ENCODE measurements at regions of chr10 and their contacts with region 1.

Region 1: GRCh38 chr10:7121154-7121810 is 289.6 kb downstream of the SFMBT2 start:
- DNase-seq: peak; percentile 15 to 85
- H3K4me3 ChIP-seq: no peak overlapping the region
- H3K27ac ChIP-seq: no peak overlapping the region
- H3K4me1 ChIP-seq: no peaks in the 10 kb centered on the region
- H3K27me3 ChIP-seq: no peaks in the 10 kb centered on the region
- CTCF ChIP-seq: peak; percentile 71 to 84 (median 76)
- EP300 ChIP-seq: no peak
- POLR2A ChIP-seq: no peak
- RAD21 ChIP-seq: peak; percentile 84 to 86

Region 2: DNA sequence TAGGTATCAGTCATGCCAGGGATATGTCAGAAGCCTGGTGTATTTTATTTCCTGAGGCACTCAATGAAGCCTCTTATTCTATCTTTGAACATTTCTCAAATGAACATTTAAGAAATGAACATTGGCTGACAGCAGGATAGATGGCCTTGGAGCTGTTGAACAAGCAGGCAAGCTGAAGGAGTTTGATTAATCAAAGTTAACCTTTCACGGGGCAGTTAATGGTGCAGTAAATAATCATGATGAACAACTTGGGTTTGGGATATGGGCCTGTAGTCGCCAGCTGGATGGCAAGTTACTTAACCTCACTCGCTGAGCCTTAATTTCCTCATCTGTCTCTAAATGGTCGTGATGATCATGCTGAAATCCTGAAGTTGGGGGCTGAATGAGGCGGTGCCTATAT is 43.4 kb before region 1 on chr10:
- CTCF ChIA-PET with region 1: no interaction called
- POLR2A ChIA-PET with region 1: no interaction called
- DNase-seq: no peak
- H3K4me3 ChIP-seq: no peak overlapping the region
- H3K27ac ChIP-seq: no peak overlapping the region
- H3K4me1 ChIP-seq: peaks cover 0 to 9% (median 4%) of the 10 kb centered on the region in 4 experiments; a peak in 3 of 7 replicates
- H3K27me3 ChIP-seq: no peaks in the 10 kb centered on the region
- CTCF ChIP-seq: no peak
- EP300 ChIP-seq: no peak
- POLR2A ChIP-seq: no peak
- RAD21 ChIP-seq: no peak

Region 3: GRCh38 chr10:7102557-7103349 is 18.5 kb before region 1 on chr10:
- CTCF ChIA-PET with region 1: interaction called, 12 read pairs
- POLR2A ChIA-PET with region 1: no interaction called
- DNase-seq: no peak
- H3K4me3 ChIP-seq: no peak overlapping the region
- H3K27ac ChIP-seq: no peak overlapping the region
- H3K4me1 ChIP-seq: no peaks in the 10 kb centered on the region
- H3K27me3 ChIP-seq: no peaks in the 10 kb centered on the region
- CTCF ChIP-seq: no peak
- EP300 ChIP-seq: no peak
- POLR2A ChIP-seq: no peak
- RAD21 ChIP-seq: no peak

Region 4: DNA sequence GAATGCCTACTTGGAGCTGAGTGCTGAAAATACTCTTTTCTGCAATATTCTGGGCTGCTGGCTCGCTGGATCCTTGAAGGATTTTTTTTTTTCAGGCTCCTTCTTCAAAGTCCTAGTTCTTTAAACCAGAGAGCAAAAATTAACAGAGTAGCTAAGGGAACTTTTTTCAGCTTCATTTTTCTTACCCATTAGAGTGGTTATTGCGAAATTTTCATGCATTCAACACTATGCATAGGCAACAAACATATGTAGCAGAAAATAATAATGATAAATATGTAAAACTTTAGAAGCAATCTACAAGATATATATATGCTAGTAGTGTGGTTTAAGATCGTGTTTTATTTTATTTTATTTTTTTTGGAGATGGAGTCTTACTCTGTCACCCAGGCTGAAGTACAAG is 24.9 kb after region 1 on chr10:
- CTCF ChIA-PET with region 1: interaction called, 13 read pairs
- POLR2A ChIA-PET with region 1: no interaction called
- DNase-seq: no peak
- H3K4me3 ChIP-seq: no peak overlapping the region
- H3K27ac ChIP-seq: no peak overlapping the region
- H3K4me1 ChIP-seq: peaks cover 0 to 4% (median under 1%) of the 10 kb centered on the region in 4 experiments; a peak in 2 of 7 replicates
- H3K27me3 ChIP-seq: no peaks in the 10 kb centered on the region
- CTCF ChIP-seq: no peak
- EP300 ChIP-seq: no peak
- POLR2A ChIP-seq: no peak
- RAD21 ChIP-seq: no peak